Panc1 (cell line): ENCODE measurements at regions of chr14 and their contacts with region 1.

Region 1: DNA sequence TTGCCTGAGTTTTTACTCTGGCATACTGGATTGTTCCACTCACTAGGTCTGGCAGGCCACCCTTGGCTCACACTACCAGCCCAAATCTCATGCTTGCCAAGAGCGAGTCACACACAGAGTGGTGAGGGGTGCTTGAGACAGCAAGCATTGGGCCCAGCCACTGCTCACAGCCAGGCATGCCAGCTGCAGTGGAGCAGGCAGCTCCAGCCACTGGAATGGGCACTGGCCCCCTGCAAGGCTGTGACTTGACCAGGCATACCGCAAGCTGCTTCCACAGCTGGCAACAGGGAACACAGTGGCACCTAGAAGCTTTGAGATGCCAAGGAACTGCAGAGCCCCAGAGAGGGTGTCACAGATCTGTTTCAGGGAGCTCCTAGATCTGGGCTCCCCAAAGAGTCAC is 488.5 kb downstream of the LRFN5 start:
- DNase-seq: no peak
- ATAC-seq: no peak
- H3K4me3 ChIP-seq: no peak overlapping the region
- H3K27ac ChIP-seq: no peak overlapping the region
- H3K4me1 ChIP-seq: no peaks in the 10 kb centered on the region
- H3K27me3 ChIP-seq: no peaks in the 10 kb centered on the region
- CTCF ChIP-seq: no peak

Region 2: GRCh38 chr14:41586237-41586636 is 508.9 kb before region 1 on chr14:
- CTCF ChIA-PET with region 1: no interaction called
- POLR2A ChIA-PET with region 1: interaction called, 11 read pairs
- in situ Hi-C with region 1: no loop called
- intact Hi-C with region 1: no loop called
- DNase-seq: no peak
- ATAC-seq: no peak
- H3K4me3 ChIP-seq: no peak overlapping the region
- H3K27ac ChIP-seq: no peak overlapping the region
- H3K4me1 ChIP-seq: no peaks in the 10 kb centered on the region
- H3K27me3 ChIP-seq: no peaks in the 10 kb centered on the region
- CTCF ChIP-seq: no peak

Region 3: DNA sequence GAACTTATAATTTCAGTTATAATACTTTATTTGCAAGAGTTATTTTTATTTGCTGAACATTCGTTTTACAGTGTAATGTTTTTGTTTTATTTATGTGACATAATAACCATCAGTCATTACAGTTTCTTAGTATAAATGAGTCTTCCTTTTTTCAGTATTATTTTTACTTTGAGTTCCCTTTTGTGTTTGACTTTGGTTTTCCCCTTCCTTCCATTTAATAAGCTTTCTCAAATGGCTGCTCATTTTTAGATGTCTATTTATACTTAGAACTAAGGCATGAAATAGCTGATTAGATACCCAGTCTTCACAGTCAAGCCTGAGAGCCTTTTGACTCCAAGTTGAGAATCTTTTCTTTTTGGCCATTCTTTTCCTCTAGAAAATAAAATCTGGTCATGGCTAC is 83.9 kb before region 1 on chr14:
- CTCF ChIA-PET with region 1: no interaction called
- POLR2A ChIA-PET with region 1: no interaction called
- in situ Hi-C with region 1: no loop called
- intact Hi-C with region 1: no loop called
- DNase-seq: no peak
- ATAC-seq: no peak
- H3K4me3 ChIP-seq: no peak overlapping the region
- H3K27ac ChIP-seq: no peak overlapping the region
- H3K4me1 ChIP-seq: no peaks in the 10 kb centered on the region
- H3K27me3 ChIP-seq: no peaks in the 10 kb centered on the region
- CTCF ChIP-seq: no peak